HCT116 (cell line): ENCODE measurements at regions of chr2 and their contacts with region 1.

Region 1: GRCh38 chr2:187499941-187500532 is 52.0 kb upstream of the CALCRL start:
- DNase-seq: peak; percentile 54
- ATAC-seq: peak; percentile 82
- H3K4me3 ChIP-seq: no peak overlapping the region
- H3K27ac ChIP-seq: no peak overlapping the region
- H3K4me1 ChIP-seq: peaks cover 4 to 10% of the 10 kb centered on the region in 2 experiments; a peak in 2 of 4 replicates
- H3K27me3 ChIP-seq: no peaks in the 10 kb centered on the region
- CTCF ChIP-seq: peak; percentile 63 to 94 (median 78)
- POLR2A ChIP-seq: no peak
- RAD21 ChIP-seq: peak; percentile 97

Region 2: DNA sequence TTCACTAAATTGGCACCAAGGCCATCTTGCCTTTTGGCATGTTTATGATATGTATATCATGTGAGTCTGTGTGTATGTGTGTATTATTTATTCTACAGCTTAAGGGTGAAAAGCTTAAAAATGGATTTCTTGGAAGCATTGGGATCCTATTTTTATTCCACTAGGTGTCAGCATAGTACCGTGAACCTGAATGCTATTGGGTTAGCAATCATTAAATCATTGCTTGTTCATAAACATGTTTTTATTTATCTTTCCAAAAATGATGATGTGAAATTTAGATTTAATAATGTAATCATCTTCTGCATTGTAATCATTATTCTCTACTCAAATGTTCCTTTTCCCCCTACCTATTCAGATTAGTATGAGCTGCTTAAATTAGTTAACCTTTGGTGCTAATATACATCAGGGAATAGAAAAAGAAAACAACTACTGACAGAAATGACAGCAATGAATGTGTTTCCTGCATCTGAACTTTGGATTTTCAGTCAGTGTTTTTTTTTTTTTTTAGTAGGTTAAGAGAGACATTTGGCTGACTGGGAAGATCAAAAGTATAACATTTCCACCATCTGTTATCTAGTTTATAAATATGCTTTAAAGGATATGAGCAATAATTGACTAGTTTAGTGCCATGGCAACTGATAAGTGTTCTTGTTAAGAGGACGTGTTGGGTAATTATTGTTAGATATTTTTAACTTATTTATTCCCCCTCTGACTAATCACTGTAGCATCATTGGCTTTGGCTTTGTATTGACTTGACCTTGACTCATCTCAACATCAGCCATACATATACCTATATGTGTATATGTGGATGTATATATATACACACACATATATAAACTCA is 636.9 kb before region 1 on chr2:
- CTCF ChIA-PET with region 1: interaction called, 20 read pairs
- POLR2A ChIA-PET with region 1: no interaction called
- RAD21 ChIA-PET with region 1: interaction called in 1 of 2 experiments, 3 read pairs
- intact Hi-C with region 1: no loop called
- DNase-seq: peak; percentile 32
- ATAC-seq: peak; percentile 78
- H3K4me3 ChIP-seq: no peak overlapping the region
- H3K27ac ChIP-seq: no peak overlapping the region
- H3K4me1 ChIP-seq: no peaks in the 10 kb centered on the region
- H3K27me3 ChIP-seq: no peaks in the 10 kb centered on the region
- CTCF ChIP-seq: peak; percentile 54 to 83 (median 61)
- POLR2A ChIP-seq: no peak
- RAD21 ChIP-seq: peak; percentile 87

Region 3: GRCh38 chr2:187150670-187151069 is 349.4 kb before region 1 on chr2:
- CTCF ChIA-PET with region 1: no interaction called
- POLR2A ChIA-PET with region 1: no interaction called
- RAD21 ChIA-PET with region 1: no interaction called
- intact Hi-C with region 1: no loop called
- DNase-seq: no peak
- ATAC-seq: no peak
- H3K4me3 ChIP-seq: no peak overlapping the region
- H3K27ac ChIP-seq: no peak overlapping the region
- H3K4me1 ChIP-seq: no peaks in the 10 kb centered on the region
- H3K27me3 ChIP-seq: no peaks in the 10 kb centered on the region
- CTCF ChIP-seq: no peak
- POLR2A ChIP-seq: no peak
- RAD21 ChIP-seq: no peak

Region 4: DNA sequence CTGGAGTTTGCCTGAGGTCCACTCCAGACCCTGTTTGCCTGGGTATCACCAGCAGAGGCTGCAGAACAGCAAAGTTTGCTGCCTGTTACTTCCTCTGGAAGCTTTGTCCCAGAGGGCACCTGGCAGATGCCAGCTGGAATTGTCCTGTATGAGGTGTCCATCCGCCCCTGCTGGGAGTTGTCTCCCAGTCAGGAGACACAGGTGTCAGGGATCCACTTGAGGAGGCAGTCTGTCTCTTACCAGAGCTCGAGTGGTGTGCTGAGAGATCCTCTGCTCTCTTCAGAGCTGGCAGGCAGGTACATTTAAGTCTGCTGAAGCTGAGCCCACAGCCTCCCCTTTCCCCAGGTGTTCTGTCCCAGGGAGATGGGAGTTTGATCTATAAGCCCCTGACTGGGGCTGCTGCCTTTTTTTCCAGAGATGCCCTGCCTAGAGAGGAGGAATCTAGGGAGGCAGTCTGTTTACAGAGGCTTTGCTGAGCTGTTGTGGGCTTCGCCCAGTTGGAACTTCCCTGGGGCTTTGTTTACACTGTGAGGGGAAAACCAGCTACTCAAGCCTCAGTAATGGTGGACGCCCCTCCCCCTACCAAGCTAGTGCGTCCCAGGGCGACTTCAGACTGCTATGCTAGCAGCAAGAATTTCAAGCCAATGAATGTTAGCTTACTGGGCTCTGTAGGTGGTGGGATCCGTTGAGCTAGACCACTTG is 19.5 kb after region 1 on chr2:
- CTCF ChIA-PET with region 1: no interaction called
- POLR2A ChIA-PET with region 1: no interaction called
- RAD21 ChIA-PET with region 1: no interaction called
- intact Hi-C with region 1: no loop called
- DNase-seq: no peak
- ATAC-seq: no peak
- H3K4me3 ChIP-seq: no peak overlapping the region
- H3K27ac ChIP-seq: no peak overlapping the region
- H3K4me1 ChIP-seq: no peaks in the 10 kb centered on the region
- H3K27me3 ChIP-seq: no peaks in the 10 kb centered on the region
- CTCF ChIP-seq: no peak
- POLR2A ChIP-seq: no peak
- RAD21 ChIP-seq: no peak

Region 5: GRCh38 chr2:187547353-187547979 is 47.4 kb after region 1 on chr2:
- CTCF ChIA-PET with region 1: interaction called, 27 read pairs
- POLR2A ChIA-PET with region 1: interaction called, 3 read pairs
- RAD21 ChIA-PET with region 1: no interaction called
- intact Hi-C with region 1: no loop called
- DNase-seq: peak; percentile 92
- ATAC-seq: peak; percentile 85
- H3K4me3 ChIP-seq: peak overlapping the region in 1 of 2 experiments; percentile 20; a peak in 2 of 4 replicates
- H3K27ac ChIP-seq: peak overlapping the region; percentile 93; the same call in 1 of the 2 replicates
- H3K4me1 ChIP-seq: peaks cover 61 to 91% of the 10 kb centered on the region in 2 experiments
- H3K27me3 ChIP-seq: no peaks in the 10 kb centered on the region
- CTCF ChIP-seq: no peak
- POLR2A ChIP-seq: no peak
- RAD21 ChIP-seq: no peak; the same call in 1 of the 2 replicates

Region 6: DNA sequence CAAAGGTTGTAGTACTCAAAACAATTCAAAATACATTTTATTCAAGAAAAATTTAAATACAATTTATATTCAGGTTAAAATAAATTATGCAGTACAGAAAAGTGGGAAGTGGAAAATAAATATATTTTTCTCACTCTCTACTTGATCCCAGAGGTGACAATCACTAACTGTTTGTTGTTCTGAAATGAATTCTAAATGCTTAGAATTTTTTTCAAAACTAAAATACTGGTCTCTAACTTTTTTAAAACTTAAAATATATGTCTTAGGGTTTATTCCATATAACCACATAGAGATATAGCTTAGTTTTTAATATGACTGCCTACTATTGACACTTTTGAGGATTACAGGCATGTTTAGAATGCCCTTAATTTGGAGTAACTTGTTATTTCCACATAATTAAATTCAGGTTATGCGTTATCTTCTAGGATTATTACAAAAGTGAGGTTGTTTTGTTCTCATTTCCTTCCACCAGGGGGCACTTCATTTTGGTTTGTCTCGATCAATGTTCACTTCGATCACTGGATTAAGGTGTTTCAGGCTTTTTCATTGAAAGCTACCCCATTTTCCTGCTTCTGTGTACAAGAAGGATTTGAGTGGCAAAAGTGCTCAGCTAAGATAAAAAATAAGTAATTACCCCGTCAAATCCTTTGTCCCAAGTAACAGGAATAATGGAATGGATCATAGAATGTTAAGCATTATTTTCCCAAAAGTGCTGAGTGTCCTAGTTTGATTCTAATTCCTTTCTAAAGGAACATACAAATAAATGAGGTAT is 81.3 kb after region 1 on chr2:
- CTCF ChIA-PET with region 1: interaction called, 412 read pairs
- POLR2A ChIA-PET with region 1: interaction called, 23 read pairs
- RAD21 ChIA-PET with region 1: interaction called, 18 to 42 read pairs
- intact Hi-C with region 1: loop called (anchors 1 kb)
- DNase-seq: peak; percentile 76
- ATAC-seq: peak; percentile 68
- H3K4me3 ChIP-seq: peak overlapping the region in 1 of 2 experiments; percentile 16; a peak in 3 of 4 replicates
- H3K27ac ChIP-seq: no peak overlapping the region
- H3K4me1 ChIP-seq: peaks cover 0 to 11% of the 10 kb centered on the region in 2 experiments; a peak in 2 of 4 replicates
- H3K27me3 ChIP-seq: no peaks in the 10 kb centered on the region
- CTCF ChIP-seq: peak; percentile 54 to 81 (median 76); a peak in 5 of 6 replicates
- POLR2A ChIP-seq: no peak
- RAD21 ChIP-seq: peak; percentile 68

Region 7: DNA sequence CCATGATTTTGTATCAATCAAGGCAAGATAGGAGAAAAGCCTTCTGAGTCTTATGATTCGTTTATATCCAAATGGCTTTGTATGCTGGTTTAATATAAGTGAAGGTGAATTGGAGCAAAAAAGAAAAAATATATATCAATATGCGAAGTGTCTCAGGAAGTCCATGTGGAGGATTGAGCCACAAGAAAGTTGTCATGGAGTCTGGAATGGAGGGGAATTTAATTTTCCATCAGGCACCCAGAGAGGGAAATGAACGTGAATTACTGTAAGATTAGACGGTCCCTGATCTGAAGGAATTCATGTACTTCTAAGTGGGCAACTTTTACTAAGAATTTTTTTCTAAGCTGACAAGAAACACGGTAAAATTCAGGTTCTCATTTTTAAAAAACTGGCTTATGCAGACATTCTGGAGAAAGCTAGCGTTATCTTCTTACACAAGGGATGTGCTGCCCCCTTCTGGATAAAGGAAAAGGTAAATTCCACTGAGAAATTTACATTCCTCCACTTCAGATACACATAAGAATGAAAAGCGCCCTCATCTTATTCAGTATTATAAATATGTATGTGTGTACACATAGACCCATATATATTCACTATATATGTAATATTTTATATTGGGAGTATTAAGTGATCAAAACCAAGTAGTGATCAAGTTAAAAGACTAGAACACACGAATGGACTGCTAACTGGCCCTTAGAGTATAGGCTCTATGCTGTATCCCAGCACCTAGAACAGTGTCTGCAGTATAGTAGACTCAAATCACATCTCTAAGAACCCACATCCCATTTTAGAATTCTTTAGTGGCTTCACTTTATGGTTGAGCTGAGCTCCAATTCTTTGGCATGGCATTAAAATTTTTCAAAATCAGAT is 343.2 kb after region 1 on chr2:
- CTCF ChIA-PET with region 1: interaction called, 24 read pairs
- POLR2A ChIA-PET with region 1: no interaction called
- RAD21 ChIA-PET with region 1: interaction called, 5 read pairs
- intact Hi-C with region 1: loop called (anchors 1 kb)
- DNase-seq: peak; percentile 53
- ATAC-seq: peak; percentile 81
- H3K4me3 ChIP-seq: no peak overlapping the region
- H3K27ac ChIP-seq: no peak overlapping the region
- H3K4me1 ChIP-seq: no peaks in the 10 kb centered on the region
- H3K27me3 ChIP-seq: no peaks in the 10 kb centered on the region
- CTCF ChIP-seq: peak; percentile 54 to 78 (median 68)
- POLR2A ChIP-seq: no peak
- RAD21 ChIP-seq: peak; percentile 87

Region 8: GRCh38 chr2:188512456-188512855 is 1012.4 kb after region 1 on chr2:
- CTCF ChIA-PET with region 1: interaction called, 9 read pairs
- POLR2A ChIA-PET with region 1: no interaction called
- RAD21 ChIA-PET with region 1: no interaction called
- intact Hi-C with region 1: loop called (anchors 1 kb)
- DNase-seq: no peak
- ATAC-seq: peak; percentile 60
- H3K4me3 ChIP-seq: no peak overlapping the region
- H3K27ac ChIP-seq: no peak overlapping the region
- H3K4me1 ChIP-seq: peaks cover 0 to 7% of the 10 kb centered on the region in 2 experiments; a peak in 1 of 4 replicates
- H3K27me3 ChIP-seq: no peaks in the 10 kb centered on the region
- CTCF ChIP-seq: peak; percentile 42 to 71 (median 61); a peak in 5 of 6 replicates
- POLR2A ChIP-seq: no peak
- RAD21 ChIP-seq: peak; percentile 89